Astrocyte of the cerebellum (primary cell): ENCODE measurements at regions of chr20 and their contacts with region 1.

Region 1: GRCh38 chr20:59495894-59496510 is 108.3 kb upstream of the PHACTR3 start:
- DNase-seq: peak; percentile 28
- H3K4me3 ChIP-seq: no peak overlapping the region
- CTCF ChIP-seq: peak; percentile 89

Region 2: GRCh38 chr20:58850693-58851174 is 645.3 kb before region 1 on chr20 and contains the start of gene GNAS-AS1:
- in situ Hi-C with region 1: loop called (anchors 25 kb)
- DNase-seq: peak; percentile 64
- H3K4me3 ChIP-seq: peak within 1 kb of the TSS; percentile 66
- CTCF ChIP-seq: no peak